Ovary (tissue), 10 donors: ENCODE measurements at regions of chr18 and their contacts with region 1.

Region 1: DNA sequence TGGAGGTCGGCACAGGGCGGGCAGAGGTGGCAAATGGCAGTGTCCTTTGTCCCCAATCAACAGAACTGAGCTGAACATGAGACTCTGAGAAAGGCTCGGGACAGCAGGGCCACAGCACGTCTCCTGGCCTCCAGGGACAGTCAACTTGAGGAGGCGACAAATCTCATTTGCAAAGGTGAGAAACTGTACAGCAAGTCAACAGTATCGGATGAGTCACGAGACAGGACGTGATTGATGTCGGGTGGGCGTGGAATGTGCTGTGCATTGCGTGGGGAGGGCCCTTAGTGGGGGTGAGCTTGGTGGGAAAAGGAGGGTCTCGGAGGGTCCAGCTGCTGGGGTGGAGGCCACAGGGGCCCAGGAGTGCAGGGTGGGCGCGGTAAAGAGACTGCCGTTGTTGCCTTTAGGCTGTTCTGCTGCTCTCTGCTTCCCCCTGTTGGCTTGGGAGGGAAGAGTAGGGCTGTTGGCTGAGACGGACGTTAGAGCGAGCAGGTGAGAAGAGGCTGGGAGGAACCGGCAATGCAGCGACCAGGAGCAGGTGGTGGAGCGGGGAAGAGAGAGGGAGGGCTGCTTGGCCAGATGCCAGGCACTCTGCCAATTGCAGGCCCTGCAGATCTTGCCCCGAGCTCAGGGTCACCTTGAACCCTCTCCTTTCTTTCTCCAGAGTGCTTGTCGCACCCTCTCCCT is 164.3 kb downstream of the BCL2 start:
- DNase-seq: no peak
- H3K4me3 ChIP-seq: no peak overlapping the region
- H3K27ac ChIP-seq: no peak overlapping the region
- H3K4me1 ChIP-seq: peaks cover 21% of the 10 kb centered on the region
- H3K27me3 ChIP-seq: no peaks in the 10 kb centered on the region
- CTCF ChIP-seq: peak in 1 of 3 donors; percentile 17
- EP300 ChIP-seq: no peak
- POLR2A ChIP-seq: no peak

Region 2: GRCh38 chr18:63025251-63026090 is 129.8 kb before region 1 on chr18:
- intact Hi-C with region 1: no loop called
- DNase-seq: peak in 1 of 5 donors; percentile 26
- H3K4me3 ChIP-seq: no peak overlapping the region
- H3K27ac ChIP-seq: no peak overlapping the region
- H3K4me1 ChIP-seq: no peaks in the 10 kb centered on the region
- H3K27me3 ChIP-seq: no peaks in the 10 kb centered on the region
- CTCF ChIP-seq: no peak
- EP300 ChIP-seq: no peak
- POLR2A ChIP-seq: no peak

Region 3: DNA sequence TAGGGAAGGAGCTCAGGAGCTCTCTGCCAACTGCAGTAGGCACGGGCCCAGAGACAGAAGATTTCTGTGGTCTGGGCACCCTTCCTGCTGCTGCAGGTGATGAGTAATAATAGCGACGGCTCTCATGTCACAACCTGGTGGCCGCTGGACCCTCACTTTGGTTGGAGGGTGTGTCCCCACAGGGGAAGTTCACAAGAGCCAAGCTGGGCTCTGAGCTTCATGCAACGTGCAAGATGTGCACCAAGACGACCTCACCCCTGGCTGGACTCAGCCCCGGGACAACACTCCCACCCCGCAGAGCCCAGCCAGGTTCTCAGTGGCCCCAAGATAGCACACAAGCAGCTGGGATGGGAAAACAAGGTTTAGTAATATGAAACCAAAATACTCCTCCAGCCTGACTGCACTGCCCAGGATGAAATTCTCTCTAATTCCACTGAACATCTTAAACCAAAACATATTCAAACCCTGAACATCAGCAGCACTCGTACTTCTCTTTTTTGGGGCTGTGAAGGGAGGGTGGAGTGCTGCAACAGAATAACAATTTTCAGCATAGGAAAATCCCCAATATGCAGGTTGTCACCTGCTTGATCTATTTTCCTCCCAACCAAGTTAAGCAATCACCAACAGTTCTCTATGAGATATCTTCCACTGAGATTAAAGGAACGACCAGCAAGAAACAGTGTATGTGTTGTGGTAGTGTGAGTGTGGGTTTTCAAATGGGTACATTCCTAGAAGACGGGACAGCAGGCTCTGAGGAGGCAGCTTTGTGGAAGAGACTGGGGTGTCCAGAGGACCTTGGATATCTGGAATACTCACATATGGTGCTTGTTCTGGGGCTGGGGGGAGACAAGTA is 137.7 kb after region 1 on chr18:
- intact Hi-C with region 1: loop called in 1 of 4 experiments (anchors 10 kb)
- DNase-seq: peak in 4 of 5 donors; percentile 36 to 69 (median 52)
- H3K4me3 ChIP-seq: no peak overlapping the region
- H3K27ac ChIP-seq: peak overlapping the region in 1 of 2 donors; percentile 6
- H3K4me1 ChIP-seq: peaks cover 38% of the 10 kb centered on the region
- H3K27me3 ChIP-seq: no peaks in the 10 kb centered on the region
- CTCF ChIP-seq: no peak
- EP300 ChIP-seq: no peak
- POLR2A ChIP-seq: no peak